ENCODE measurements at regions of chr4 and their contacts with region 1.

Region 1: GRCh38 chr4:159435561-159436023 is 332.7 kb downstream of the RAPGEF2 start:
- DNase-seq: peak; percentile 80
- ATAC-seq: peak; percentile 92
- H3K4me3 ChIP-seq: peak overlapping the region; percentile 11; the same call in 1 of the 2 replicates
- H3K27ac ChIP-seq: peak overlapping the region; percentile 91
- H3K4me1 ChIP-seq: peaks cover 25% of the 10 kb centered on the region
- H3K27me3 ChIP-seq: no peaks in the 10 kb centered on the region
- CTCF ChIP-seq: no peak

Region 2: DNA sequence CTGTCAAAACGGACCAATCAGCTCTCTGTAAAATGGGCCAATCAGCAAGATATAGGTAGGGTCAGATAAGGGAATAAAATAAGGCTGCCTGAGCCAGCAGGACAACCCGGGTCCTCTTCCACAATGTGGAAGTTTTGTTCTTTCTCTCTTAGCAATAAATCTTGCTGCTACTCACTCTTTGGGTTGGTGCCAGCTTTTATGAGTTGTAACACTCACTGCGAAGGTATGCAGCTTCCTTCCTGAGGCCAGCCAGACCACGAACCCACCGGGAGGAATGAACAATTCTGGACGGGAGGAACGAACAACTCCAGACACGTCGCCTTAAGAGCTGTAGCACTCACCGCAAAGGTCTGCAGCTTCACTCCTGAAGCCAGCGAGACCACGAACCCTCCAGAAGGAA is 44.9 kb before region 1 on chr4:
- CTCF ChIA-PET with region 1: no interaction called
- POLR2A ChIA-PET with region 1: no interaction called
- intact Hi-C with region 1: loop called (anchors 2 kb)
- DNase-seq: peak; percentile 97
- ATAC-seq: peak; percentile 96
- H3K4me3 ChIP-seq: no peak overlapping the region
- H3K27ac ChIP-seq: peak overlapping the region; percentile 76
- H3K4me1 ChIP-seq: peaks cover 11% of the 10 kb centered on the region
- H3K27me3 ChIP-seq: no peaks in the 10 kb centered on the region
- CTCF ChIP-seq: no peak

Measured in PC-3 (cell line).